A549 (cell line): ENCODE measurements at regions of chr19 and their contacts with region 1.

Region 1: GRCh38 chr19:28727480-28728159 is 485.3 kb downstream of the UQCRFS1 start:
- DNase-seq: no peak
- ATAC-seq: no peak
- H3K4me3 ChIP-seq: no peak overlapping the region
- H3K27ac ChIP-seq: no peak overlapping the region
- H3K4me1 ChIP-seq: no peaks in the 10 kb centered on the region
- CTCF ChIP-seq: no peak
- EP300 ChIP-seq: no peak
- POLR2A ChIP-seq: no peak
- RAD21 ChIP-seq: no peak

Region 2: GRCh38 chr19:28530406-28531035 is 197.1 kb before region 1 on chr19:
- CTCF ChIA-PET with region 1: no interaction called
- POLR2A ChIA-PET with region 1: no interaction called
- DNase-seq: no peak
- ATAC-seq: no peak
- H3K4me3 ChIP-seq: no peak overlapping the region
- H3K27ac ChIP-seq: no peak overlapping the region
- H3K4me1 ChIP-seq: no peaks in the 10 kb centered on the region
- CTCF ChIP-seq: no peak
- EP300 ChIP-seq: no peak
- POLR2A ChIP-seq: no peak
- RAD21 ChIP-seq: no peak

Region 3: DNA sequence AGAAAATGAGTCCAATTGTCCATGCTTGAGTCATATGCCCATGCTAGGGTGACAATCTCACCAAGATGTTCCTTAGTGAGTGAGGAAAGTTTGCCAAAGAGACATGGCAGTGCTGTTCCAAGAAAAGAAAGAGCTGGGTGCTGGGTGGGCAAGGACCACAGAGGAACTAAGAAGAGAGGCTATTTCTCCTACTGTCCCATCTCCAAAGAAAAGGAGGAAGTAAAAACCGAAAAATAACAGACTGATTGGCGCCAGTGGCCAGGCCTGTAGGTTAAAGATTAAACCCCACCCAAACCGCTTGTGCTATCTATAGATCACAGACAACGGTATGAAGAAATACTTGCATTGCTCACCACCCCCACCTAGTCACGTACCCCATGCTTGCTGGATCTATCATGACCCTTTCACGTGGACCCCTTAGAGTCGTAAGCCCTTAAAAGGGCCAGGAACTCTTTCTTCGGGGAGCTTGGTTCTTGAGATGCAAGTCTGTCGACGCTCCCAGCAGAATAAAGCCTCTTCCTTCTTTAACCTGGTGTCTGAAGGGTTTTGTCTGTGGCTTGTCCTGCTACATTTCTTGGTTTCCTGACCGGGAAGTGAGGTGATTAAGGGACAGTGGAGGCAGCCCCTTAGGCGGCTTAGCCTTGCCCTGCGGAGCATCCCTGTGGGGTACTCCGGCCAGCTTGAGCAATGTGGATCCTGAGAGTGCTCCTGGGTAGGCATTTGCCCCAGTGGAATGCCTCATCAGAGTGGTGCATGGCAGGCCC is 121.2 kb before region 1 on chr19:
- CTCF ChIA-PET with region 1: no interaction called
- POLR2A ChIA-PET with region 1: no interaction called
- DNase-seq: peak in 1 of 2 experiments; percentile 18
- ATAC-seq: no peak; a peak in 1 of 6 replicates
- H3K4me3 ChIP-seq: no peak overlapping the region
- H3K27ac ChIP-seq: no peak overlapping the region
- H3K4me1 ChIP-seq: no peaks in the 10 kb centered on the region
- CTCF ChIP-seq: no peak
- EP300 ChIP-seq: no peak
- POLR2A ChIP-seq: no peak
- RAD21 ChIP-seq: no peak

Region 4: DNA sequence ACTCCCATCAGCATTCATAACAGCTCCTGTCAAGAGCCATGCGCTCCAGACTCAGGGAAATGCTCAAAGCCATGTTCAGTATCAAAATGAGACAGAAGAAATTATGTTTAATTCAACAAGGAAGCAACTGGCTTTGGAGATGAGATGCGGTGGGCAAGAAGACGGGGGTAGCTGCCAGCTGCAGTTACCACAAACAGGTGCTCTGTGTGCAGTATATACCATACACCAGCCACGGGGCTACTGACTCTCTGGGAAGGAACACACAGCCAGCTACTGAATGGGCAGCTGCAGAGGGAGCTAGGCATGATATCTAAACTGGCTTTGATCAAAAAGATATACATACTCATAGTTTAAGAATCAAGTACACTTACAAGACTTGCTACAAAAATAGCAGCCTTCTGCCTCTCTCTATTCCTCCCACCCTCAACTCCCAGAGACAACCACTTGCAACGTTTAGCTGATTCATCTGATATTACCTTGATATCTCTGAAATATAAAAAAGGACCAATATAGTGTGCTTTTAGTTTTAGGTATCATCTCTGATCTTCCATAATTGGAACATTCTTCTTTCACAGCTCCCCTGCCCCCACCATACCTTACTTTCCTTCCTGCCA is 107.7 kb before region 1 on chr19:
- CTCF ChIA-PET with region 1: no interaction called
- POLR2A ChIA-PET with region 1: no interaction called
- DNase-seq: no peak
- ATAC-seq: no peak
- H3K4me3 ChIP-seq: no peak overlapping the region
- H3K27ac ChIP-seq: no peak overlapping the region
- H3K4me1 ChIP-seq: no peaks in the 10 kb centered on the region
- CTCF ChIP-seq: no peak
- EP300 ChIP-seq: no peak
- POLR2A ChIP-seq: no peak
- RAD21 ChIP-seq: no peak

Region 5: GRCh38 chr19:28710278-28710677 is 17.3 kb before region 1 on chr19:
- CTCF ChIA-PET with region 1: interaction called, 13 read pairs
- POLR2A ChIA-PET with region 1: no interaction called
- DNase-seq: peak; percentile 30 to 79
- ATAC-seq: peak; percentile 74 to 83; a peak in 4 of 6 replicates
- H3K4me3 ChIP-seq: no peak overlapping the region
- H3K27ac ChIP-seq: no peak overlapping the region
- H3K4me1 ChIP-seq: no peaks in the 10 kb centered on the region
- CTCF ChIP-seq: peak; percentile 87
- EP300 ChIP-seq: no peak
- POLR2A ChIP-seq: no peak
- RAD21 ChIP-seq: peak; percentile 89 to 92

Region 6: DNA sequence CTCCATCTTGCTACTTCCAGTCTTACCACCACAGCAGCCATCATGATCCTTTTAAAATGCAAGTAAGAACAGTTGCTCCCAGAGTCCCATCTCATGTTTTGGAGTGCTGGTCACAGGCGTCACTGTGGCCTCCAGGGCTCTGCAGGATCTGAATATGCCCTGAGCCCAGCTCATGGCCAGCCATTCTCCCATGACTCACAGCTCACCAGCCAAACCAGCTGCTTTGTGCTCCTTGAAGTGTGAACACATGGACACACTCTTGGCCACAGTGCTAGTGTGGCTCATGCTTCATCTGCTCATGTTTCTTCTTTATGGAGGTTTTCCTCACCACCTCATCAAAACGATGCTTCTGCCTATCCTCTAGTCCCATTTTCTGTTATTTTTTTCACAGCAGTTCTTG is 18.9 kb after region 1 on chr19:
- CTCF ChIA-PET with region 1: no interaction called
- POLR2A ChIA-PET with region 1: no interaction called
- DNase-seq: no peak
- ATAC-seq: no peak
- H3K4me3 ChIP-seq: no peak overlapping the region
- H3K27ac ChIP-seq: no peak overlapping the region
- H3K4me1 ChIP-seq: no peaks in the 10 kb centered on the region
- CTCF ChIP-seq: no peak
- EP300 ChIP-seq: no peak
- POLR2A ChIP-seq: no peak
- RAD21 ChIP-seq: no peak